MCF 10A (cell line): ENCODE measurements at regions of chr22 and their contacts with region 1.

Region 1: GRCh38 chr22:31192513-31192912 is 19.6 kb upstream of the LIMK2 start:
- DNase-seq: peak; percentile 69
- H3K4me3 Mint-ChIP-seq: no peak overlapping the region
- H3K27ac Mint-ChIP-seq: peak overlapping the region; percentile 88
- H3K4me1 Mint-ChIP-seq: peaks cover 17% of the 10 kb centered on the region
- H3K27me3 Mint-ChIP-seq: no peaks in the 10 kb centered on the region
- CTCF ChIP-seq: no peak

Region 2: GRCh38 chr22:31046539-31047226 is 145.8 kb before region 1 on chr22:
- CTCF ChIA-PET with region 1: no interaction called
- POLR2A ChIA-PET with region 1: no interaction called
- intact Hi-C with region 1: no loop called
- DNase-seq: no peak
- H3K4me3 Mint-ChIP-seq: no peak overlapping the region
- H3K27ac Mint-ChIP-seq: no peak overlapping the region
- H3K4me1 Mint-ChIP-seq: no peaks in the 10 kb centered on the region
- H3K27me3 Mint-ChIP-seq: no peaks in the 10 kb centered on the region
- CTCF ChIP-seq: no peak

Region 3: DNA sequence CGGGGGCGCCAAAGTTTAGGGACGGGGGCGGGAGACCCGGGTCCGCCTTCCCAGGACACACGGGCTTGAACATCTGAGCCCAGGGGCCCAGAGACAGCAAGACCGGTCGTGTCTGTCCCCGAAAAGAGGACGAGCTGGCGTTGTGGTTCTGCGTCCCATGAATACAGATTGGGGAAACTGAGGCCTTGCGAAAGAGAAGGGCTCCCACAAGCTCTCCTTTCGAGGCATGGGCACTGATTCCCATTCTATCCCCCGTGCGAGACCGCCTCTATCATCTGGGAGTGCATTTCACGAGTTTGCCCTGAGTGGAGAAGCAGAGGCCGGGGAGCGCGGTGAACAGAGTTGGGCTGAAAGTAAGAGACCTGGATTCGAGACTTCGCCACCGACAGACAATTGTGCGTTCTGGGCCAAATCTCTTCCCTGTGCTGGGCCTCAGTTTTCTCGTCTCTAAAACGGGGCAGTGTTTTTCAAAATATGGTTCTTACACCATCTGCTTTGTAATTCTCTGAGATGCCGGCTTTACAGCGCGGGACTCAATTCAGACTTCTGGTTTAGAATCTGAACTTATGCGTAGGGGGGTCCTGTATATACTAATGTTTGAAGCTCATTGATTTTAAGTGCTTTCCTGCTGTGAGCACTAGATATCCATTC is 32.1 kb before region 1 on chr22:
- CTCF ChIA-PET with region 1: interaction called, 5 read pairs
- POLR2A ChIA-PET with region 1: interaction called, 23 read pairs
- intact Hi-C with region 1: no loop called
- DNase-seq: no peak
- H3K4me3 Mint-ChIP-seq: peak overlapping the region; percentile 89
- H3K27ac Mint-ChIP-seq: peak overlapping the region; percentile 97
- H3K4me1 Mint-ChIP-seq: peaks cover 14% of the 10 kb centered on the region
- H3K27me3 Mint-ChIP-seq: no peaks in the 10 kb centered on the region
- CTCF ChIP-seq: no peak

Region 4: DNA sequence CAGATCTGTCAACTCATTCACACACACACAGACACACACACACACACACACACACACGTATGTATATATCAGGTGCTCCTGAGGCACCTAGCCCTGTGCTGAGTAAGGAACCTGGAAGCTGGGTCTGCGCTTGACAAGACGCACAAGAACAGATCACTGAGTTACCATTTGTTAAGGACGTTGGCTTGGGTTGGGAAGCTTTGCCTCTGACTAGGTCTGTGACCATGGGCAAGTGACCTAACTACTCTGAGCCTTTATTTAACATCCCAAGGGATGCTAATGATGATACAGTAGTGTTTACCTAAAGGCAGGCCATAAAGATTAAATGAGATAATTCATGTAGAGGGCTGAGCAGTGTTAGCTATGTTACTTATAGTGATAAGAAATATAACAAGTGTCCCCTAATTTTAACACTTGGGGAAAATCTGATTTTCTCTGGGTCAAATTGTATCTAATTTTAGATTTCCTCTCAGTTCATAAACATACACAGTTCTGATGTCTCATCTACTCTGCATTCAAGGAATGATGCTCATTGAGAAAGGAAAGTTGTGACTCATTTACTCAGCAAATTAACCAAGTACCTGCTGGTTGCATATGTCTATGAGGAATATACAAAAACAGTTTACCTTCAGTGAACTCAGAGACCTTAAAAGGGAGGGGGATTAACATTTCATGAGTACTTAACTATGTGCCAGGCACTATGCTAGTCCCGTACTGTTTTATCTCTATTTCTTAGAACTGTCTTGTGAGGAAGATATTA is 18.9 kb before region 1 on chr22:
- CTCF ChIA-PET with region 1: interaction called, 3 read pairs
- POLR2A ChIA-PET with region 1: interaction called, 100 read pairs
- intact Hi-C with region 1: loop called (anchors 1 kb)
- DNase-seq: peak; percentile 68
- H3K4me3 Mint-ChIP-seq: peak overlapping the region; percentile 40
- H3K27ac Mint-ChIP-seq: peak overlapping the region; percentile 83
- H3K4me1 Mint-ChIP-seq: peaks cover 37% of the 10 kb centered on the region
- H3K27me3 Mint-ChIP-seq: no peaks in the 10 kb centered on the region
- CTCF ChIP-seq: no peak

Region 5: DNA sequence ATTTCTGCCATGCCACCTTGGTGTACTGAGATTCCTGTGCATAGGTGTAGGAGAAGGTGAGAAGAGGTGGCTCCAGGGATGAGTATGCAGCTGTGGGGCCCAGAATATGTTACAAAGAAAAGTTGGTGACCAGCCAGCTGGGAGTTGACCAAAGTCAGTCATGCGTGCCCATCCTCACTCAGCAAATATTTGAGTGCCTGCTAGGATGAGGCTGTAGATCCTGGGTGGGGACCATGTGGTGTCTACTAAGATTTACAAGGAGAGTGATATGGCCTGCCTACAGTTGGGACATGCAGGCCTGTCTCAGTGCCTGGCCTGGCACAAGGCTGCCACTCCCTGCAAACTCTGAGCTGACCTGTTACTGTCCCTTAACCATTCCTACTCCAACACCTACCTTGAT is 13.2 kb before region 1 on chr22:
- CTCF ChIA-PET with region 1: interaction called, 3 read pairs
- POLR2A ChIA-PET with region 1: interaction called, 100 read pairs
- intact Hi-C with region 1: no loop called
- DNase-seq: peak; percentile 81
- H3K4me3 Mint-ChIP-seq: no peak overlapping the region
- H3K27ac Mint-ChIP-seq: peak overlapping the region; percentile 82
- H3K4me1 Mint-ChIP-seq: peaks cover 34% of the 10 kb centered on the region
- H3K27me3 Mint-ChIP-seq: no peaks in the 10 kb centered on the region
- CTCF ChIP-seq: no peak

Region 6: DNA sequence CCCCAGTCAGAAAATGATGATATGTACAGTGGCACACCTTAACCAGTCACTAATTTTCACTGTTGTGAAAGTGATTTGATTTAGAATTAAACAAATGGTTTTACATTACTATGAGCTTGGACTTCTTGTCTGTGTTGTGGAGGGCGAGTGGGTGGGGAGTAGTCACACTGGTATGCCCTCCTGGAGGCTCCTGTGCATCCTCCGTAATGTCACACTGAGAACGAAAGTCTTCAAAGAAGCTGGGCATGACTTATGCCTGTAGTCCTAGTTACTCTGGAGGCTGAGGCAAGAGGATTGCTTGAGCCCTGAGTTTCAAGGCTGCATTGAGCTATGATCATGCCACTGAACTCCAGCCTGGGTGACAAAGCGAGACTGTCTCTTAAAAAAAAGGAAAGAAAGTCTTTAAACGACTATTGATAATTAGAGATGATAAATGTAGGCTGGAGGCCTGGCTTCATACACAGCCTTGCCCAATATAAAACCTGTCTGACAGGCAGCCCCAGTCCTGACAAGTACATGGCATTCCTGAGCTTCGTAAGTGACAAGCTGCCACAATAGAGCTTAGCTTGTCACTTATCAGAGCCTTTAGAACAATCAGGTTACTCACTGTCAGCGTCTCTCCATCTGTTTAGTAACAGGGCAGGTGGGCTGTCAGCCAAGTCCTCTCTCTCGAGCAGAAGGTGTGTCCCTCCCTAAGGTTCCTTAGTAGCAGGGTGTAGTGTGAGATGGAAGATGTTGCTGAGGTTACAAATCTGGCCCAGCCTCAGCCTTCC is 14.6 kb after region 1 on chr22:
- CTCF ChIA-PET with region 1: interaction called, 33 read pairs
- POLR2A ChIA-PET with region 1: interaction called, 13 read pairs
- intact Hi-C with region 1: no loop called
- DNase-seq: peak; percentile 42
- H3K4me3 Mint-ChIP-seq: no peak overlapping the region
- H3K27ac Mint-ChIP-seq: peak overlapping the region; percentile 75
- H3K4me1 Mint-ChIP-seq: peaks cover 16% of the 10 kb centered on the region
- H3K27me3 Mint-ChIP-seq: no peaks in the 10 kb centered on the region
- CTCF ChIP-seq: no peak